Dendritic cell treated with granulocyte-macrophage colony-stimulating factor and Interleukin-4, amounts not matched to agents 40 ng/mL and 50 ng/mL, for 4 days (primary cell): ENCODE measurements at regions of chr9 and their contacts with region 1.

Region 1: DNA sequence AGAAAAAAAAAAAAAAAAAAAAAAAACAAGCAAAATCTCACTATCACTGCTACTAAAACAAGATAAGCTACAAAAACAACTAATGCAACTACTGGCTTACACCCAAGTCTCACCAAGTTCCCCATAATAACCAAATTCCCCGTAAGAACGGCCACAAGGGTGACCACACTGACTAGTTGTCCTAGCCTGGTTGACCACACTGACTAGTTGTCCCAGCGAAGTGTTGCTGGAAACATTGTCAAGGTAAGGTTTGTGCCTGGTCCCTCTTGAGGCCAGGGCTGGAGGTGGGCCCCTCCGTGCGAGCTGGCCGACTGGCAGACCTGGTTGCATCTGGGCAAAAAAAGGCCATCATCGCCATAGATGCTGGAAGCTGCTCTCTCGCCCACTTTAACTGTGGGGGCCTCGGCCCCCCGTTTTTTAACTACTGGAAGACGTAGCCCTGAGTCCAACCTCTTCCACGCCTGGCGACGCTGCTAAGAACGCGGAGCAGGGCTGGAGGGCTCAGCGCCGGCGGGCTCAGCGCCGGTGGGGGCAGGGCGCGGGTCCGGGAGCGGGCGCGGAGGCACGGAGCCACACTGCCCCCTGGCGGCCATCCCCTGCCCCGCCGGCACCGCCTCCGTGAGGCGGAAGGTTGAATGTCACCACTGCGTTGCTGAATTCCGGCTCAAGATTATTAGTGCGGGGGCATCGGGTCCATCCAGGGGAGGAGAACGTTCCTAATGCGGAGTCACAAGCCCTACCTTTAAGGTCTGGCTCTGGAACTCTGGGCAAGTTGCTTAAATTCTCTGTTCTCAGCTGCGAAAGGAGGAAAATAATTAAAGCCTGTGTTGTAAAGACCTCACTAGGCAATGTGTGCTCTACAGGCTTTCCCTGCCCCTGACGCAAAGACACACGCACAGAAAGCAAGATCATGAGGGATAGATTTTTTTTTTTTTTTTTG is 84.0 kb downstream of the HSD17B3 start:
- H3K4me3 Mint-ChIP-seq: peak overlapping the region; percentile 71
- H3K27ac Mint-ChIP-seq: peak overlapping the region; percentile 73
- H3K4me1 Mint-ChIP-seq: peaks cover 35% of the 10 kb centered on the region
- H3K27me3 Mint-ChIP-seq: peaks cover 62% of the 10 kb centered on the region

Region 2: GRCh38 chr9:95510709-95511615 is 707.1 kb before region 1 on chr9:
- intact Hi-C with region 1: loop called (anchors 10 kb)
- H3K4me3 Mint-ChIP-seq: peak overlapping the region; percentile 94
- H3K27ac Mint-ChIP-seq: no peak overlapping the region
- H3K4me1 Mint-ChIP-seq: peaks cover 57% of the 10 kb centered on the region
- H3K27me3 Mint-ChIP-seq: peaks cover 92% of the 10 kb centered on the region

Region 3: GRCh38 chr9:95726756-95727155 is 491.3 kb before region 1 on chr9:
- intact Hi-C with region 1: loop called (anchors 1 kb)
- H3K4me3 Mint-ChIP-seq: no peak overlapping the region
- H3K27ac Mint-ChIP-seq: no peak overlapping the region
- H3K4me1 Mint-ChIP-seq: peaks cover 11% of the 10 kb centered on the region
- H3K27me3 Mint-ChIP-seq: peaks cover 21% of the 10 kb centered on the region

Region 4: GRCh38 chr9:95875305-95876137 is 342.5 kb before region 1 on chr9 and contains the start of gene ERCC6L2:
- intact Hi-C with region 1: loop called (anchors 5 kb)
- H3K4me3 Mint-ChIP-seq: no peak within 1 kb of the TSS
- H3K27ac Mint-ChIP-seq: no peak within 1 kb of the TSS
- H3K4me1 Mint-ChIP-seq: peaks cover 10% of the 10 kb centered on the region
- H3K27me3 Mint-ChIP-seq: no peaks in the 10 kb centered on the region

Region 5: DNA sequence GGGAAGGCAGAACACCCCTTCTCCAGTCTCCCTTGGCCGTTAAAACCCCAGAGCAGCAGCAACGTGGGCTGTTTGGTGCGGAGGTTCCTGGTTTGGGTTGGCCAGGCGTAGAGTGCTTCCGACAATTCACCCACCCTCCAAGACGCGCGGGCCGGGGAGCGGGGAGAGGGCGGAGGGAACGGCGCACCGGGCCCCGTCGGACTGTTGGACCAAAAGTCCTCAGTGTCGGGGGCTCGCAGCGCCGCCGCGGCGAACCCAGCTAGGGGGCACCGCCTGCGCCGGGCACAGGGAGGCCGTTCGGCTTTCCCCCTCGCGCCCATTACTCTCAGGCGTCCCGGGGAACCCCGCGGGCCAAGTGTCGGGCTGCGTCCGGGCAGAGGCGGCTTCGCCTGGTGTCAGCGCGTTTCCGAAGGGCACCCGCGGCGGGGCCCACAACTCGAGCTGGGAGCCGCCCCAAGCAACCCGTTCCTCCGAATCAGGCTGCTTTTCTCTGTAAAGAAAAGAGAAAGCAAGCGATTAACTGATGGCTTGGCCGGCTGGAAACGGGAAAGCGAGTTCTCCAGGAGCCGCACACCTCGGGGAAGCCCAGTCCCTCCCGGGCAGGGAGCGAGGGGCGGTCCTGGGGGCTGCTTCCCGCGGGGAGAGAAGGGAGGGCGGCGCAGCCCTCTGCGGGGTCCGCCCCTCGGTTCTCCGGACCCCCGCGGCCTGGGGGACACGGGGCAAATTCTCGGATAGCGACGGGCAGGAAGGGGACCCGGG is 197.1 kb before region 1 on chr9:
- intact Hi-C with region 1: loop called (anchors 10 kb)
- H3K4me3 Mint-ChIP-seq: peak overlapping the region; percentile 73
- H3K27ac Mint-ChIP-seq: peak overlapping the region; percentile 41
- H3K4me1 Mint-ChIP-seq: peaks cover 27% of the 10 kb centered on the region
- H3K27me3 Mint-ChIP-seq: peaks cover 67% of the 10 kb centered on the region

Region 6: GRCh38 chr9:96169484-96169883 is 48.5 kb before region 1 on chr9:
- intact Hi-C with region 1: no loop called
- H3K4me3 Mint-ChIP-seq: no peak overlapping the region
- H3K27ac Mint-ChIP-seq: no peak overlapping the region
- H3K4me1 Mint-ChIP-seq: peaks cover 5% of the 10 kb centered on the region
- H3K27me3 Mint-ChIP-seq: peaks cover 4% of the 10 kb centered on the region

Region 7: DNA sequence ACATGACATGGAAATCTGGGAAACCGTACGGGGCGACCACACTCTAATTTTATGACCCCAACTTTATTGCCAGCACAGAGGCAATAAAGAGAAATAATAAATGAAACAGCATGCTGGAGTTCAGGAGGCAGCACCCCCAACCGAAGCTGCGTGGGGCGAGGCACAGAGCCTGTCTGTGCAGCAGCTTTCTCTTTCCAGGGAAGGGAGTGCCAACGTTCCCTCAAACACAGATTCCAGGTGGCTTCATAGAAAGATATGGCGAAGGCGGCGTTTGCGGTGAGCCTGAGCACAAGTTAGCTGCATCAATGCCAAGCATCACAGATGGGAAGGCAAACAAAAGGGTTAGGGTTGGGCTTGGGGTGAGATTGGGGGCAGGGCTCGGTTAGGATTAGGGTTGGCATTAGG is 30.9 kb before region 1 on chr9:
- intact Hi-C with region 1: no loop called
- H3K4me3 Mint-ChIP-seq: no peak overlapping the region
- H3K27ac Mint-ChIP-seq: no peak overlapping the region
- H3K4me1 Mint-ChIP-seq: no peaks in the 10 kb centered on the region
- H3K27me3 Mint-ChIP-seq: peaks cover 27% of the 10 kb centered on the region

Region 8: GRCh38 chr9:96241391-96241809 is 23.4 kb after region 1 on chr9:
- intact Hi-C with region 1: no loop called
- H3K4me3 Mint-ChIP-seq: no peak overlapping the region
- H3K27ac Mint-ChIP-seq: no peak overlapping the region
- H3K4me1 Mint-ChIP-seq: no peaks in the 10 kb centered on the region
- H3K27me3 Mint-ChIP-seq: peaks cover 21% of the 10 kb centered on the region